CD4-positive, alpha-beta T cell (primary cell): ENCODE measurements at regions of chr19 and their contacts with region 1.

Region 1: GRCh38 chr19:34974646-34975045 is 10.6 kb upstream of the ZNF792 start:
- DNase-seq: peak in 1 of 14 experiments; percentile 37
- ATAC-seq: no peak
- H3K4me3 ChIP-seq: no peak overlapping the region
- H3K4me3 Mint-ChIP-seq: no peak overlapping the region
- H3K27ac ChIP-seq: no peak overlapping the region
- H3K27ac Mint-ChIP-seq: peak overlapping the region; percentile 18
- H3K4me1 ChIP-seq: peaks cover 21% of the 10 kb centered on the region
- H3K4me1 Mint-ChIP-seq: peaks cover 22% of the 10 kb centered on the region
- H3K27me3 ChIP-seq: no peaks in the 10 kb centered on the region
- H3K27me3 Mint-ChIP-seq: no peaks in the 10 kb centered on the region
- CTCF ChIP-seq: no peak

Region 2: DNA sequence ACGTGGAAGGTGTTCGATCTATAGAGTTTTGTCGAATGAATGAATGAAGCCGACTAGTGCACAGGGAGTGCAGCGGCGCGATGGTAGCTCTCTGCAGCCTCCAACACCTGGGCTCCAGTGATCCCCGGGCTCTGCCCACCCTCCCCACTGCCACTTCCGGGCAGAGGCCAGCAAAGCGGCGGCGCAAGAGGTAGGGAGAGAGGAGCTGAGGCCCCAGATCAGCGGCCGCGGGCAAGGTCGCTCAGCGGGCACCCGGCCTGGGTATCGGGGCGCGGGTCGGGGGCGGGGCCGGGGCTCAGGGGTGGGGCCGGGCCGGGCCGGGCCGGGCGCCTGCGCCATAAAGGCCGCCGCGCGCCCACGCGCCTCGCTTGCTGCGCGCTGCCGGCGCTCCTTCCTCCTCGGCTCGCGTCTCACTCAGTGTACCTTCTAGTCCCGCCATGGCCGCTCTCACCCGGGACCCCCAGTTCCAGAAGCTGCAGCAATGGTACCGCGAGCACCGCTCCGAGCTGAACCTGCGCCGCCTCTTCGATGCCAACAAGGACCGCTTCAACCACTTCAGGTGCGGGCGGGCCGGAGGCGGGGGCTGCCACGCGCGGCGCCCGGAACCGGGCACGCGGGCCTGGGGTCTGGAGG is 609.7 kb before region 1 on chr19 and contains the start of gene GPI:
- CTCF ChIA-PET with region 1: no interaction called
- POLR2A ChIA-PET with region 1: no interaction called
- intact Hi-C with region 1: no loop called
- DNase-seq: peak; percentile 32 to 85 (median 60)
- ATAC-seq: peak; percentile 94
- H3K4me3 ChIP-seq: peak within 1 kb of the TSS; percentile 95
- H3K4me3 Mint-ChIP-seq: peak within 1 kb of the TSS; percentile 99
- H3K27ac ChIP-seq: peak within 1 kb of the TSS in 1 of 2 donors; percentile 59
- H3K27ac Mint-ChIP-seq: peak within 1 kb of the TSS; percentile 87
- H3K4me1 ChIP-seq: peaks cover 37% of the 10 kb centered on the region
- H3K4me1 Mint-ChIP-seq: peaks cover 41% of the 10 kb centered on the region
- H3K27me3 ChIP-seq: no peaks in the 10 kb centered on the region
- H3K27me3 Mint-ChIP-seq: no peaks in the 10 kb centered on the region
- CTCF ChIP-seq: no peak
- total RNA-seq, gene GPI: 85.0 to 86.0 TPM

Region 3: DNA sequence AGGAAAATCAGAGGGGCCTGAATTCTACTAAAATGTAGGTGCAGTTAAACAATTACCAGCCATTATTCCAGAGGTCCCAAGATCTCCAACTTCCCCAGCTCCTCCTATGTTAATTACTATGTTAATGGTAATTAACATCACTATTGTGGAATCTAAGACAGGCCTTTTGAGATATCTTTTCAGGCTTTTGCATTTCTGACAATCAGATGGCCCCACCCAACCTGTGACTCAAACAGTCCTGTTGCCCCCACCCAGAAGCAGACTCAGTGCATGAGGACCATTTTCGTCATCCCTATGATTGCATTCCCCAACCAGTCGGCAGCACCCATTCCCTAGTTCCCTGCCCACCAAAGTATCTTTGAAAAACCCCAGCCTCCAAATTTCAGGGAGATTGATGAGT is 56.5 kb before region 1 on chr19:
- CTCF ChIA-PET with region 1: no interaction called
- POLR2A ChIA-PET with region 1: no interaction called
- intact Hi-C with region 1: no loop called
- DNase-seq: no peak
- ATAC-seq: no peak
- H3K4me3 ChIP-seq: no peak overlapping the region
- H3K4me3 Mint-ChIP-seq: no peak overlapping the region
- H3K27ac ChIP-seq: no peak overlapping the region
- H3K27ac Mint-ChIP-seq: no peak overlapping the region
- H3K4me1 ChIP-seq: no peaks in the 10 kb centered on the region
- H3K4me1 Mint-ChIP-seq: no peaks in the 10 kb centered on the region
- H3K27me3 ChIP-seq: no peaks in the 10 kb centered on the region
- H3K27me3 Mint-ChIP-seq: peaks cover 4% of the 10 kb centered on the region
- CTCF ChIP-seq: no peak

Region 4: GRCh38 chr19:34963573-34964409 is 10.9 kb before region 1 on chr19 and contains the start of gene ZNF792:
- CTCF ChIA-PET with region 1: interaction called, 3 read pairs
- POLR2A ChIA-PET with region 1: interaction called, 11 read pairs
- intact Hi-C with region 1: no loop called
- DNase-seq: peak in 13 of 14 experiments; percentile 9 to 65 (median 46)
- ATAC-seq: peak; percentile 63
- H3K4me3 ChIP-seq: peak within 1 kb of the TSS; percentile 93
- H3K4me3 Mint-ChIP-seq: peak within 1 kb of the TSS; percentile 96
- H3K27ac ChIP-seq: peak within 1 kb of the TSS; percentile 46 to 57
- H3K27ac Mint-ChIP-seq: peak within 1 kb of the TSS; percentile 89
- H3K4me1 ChIP-seq: peaks cover 36% of the 10 kb centered on the region
- H3K4me1 Mint-ChIP-seq: peaks cover 29% of the 10 kb centered on the region
- H3K27me3 ChIP-seq: no peaks in the 10 kb centered on the region
- H3K27me3 Mint-ChIP-seq: no peaks in the 10 kb centered on the region
- CTCF ChIP-seq: no peak
- total RNA-seq, gene ZNF792: 6.8 to 8.9 TPM

Region 5: DNA sequence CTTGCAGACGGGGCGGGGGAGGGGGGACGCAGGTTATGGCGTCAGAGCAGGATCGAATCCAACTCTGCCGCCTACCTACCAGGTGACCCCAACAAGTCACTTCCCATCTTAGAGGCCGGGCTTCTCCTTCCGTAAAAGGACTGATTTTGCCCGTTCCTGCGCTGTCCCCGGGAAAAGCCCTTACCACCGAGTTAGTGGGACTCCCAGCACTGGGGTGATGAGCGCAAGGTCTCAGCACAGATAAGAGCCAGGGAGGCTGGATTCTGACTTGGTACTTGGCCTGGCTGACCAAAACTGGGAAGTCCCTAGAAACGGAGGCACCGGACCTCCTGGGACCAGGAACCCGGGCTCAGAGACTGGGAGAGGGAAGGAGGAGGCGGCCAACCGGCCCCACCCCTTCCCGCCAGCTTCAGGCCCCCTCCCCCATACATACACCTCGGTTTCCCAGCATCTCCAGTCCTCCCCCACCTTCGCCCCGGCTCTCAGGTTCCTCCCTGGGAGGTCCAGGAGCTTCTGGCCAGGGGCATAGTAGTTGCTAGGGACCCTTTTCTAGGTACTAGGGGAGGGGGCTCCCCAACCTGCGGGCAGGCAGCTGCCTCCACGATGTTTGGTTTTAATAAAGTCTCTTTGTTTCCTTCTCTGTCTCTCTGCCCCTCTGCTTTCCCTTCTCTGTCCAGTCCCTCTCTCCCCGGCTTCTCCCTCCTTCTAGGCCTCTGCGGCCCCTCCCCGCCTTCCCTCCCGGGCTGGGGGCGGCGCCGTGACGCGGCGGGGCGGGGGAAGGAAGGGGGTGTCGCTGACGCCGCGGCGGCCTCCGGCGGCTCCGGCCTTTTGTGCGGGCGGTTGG is 25.1 kb after region 1 on chr19 and contains the start of gene GRAMD1A:
- CTCF ChIA-PET with region 1: interaction called, 10 read pairs
- POLR2A ChIA-PET with region 1: interaction called, 12 read pairs
- intact Hi-C with region 1: loop called (anchors 1 to 2 kb)
- DNase-seq: peak; percentile 50 to 85 (median 74)
- ATAC-seq: peak; percentile 28
- H3K4me3 ChIP-seq: peak within 1 kb of the TSS; percentile 59
- H3K4me3 Mint-ChIP-seq: peak within 1 kb of the TSS; percentile 99
- H3K27ac ChIP-seq: peak within 1 kb of the TSS; percentile 79 to 92
- H3K27ac Mint-ChIP-seq: peak within 1 kb of the TSS; percentile 98
- H3K4me1 ChIP-seq: peaks cover 89% of the 10 kb centered on the region
- H3K4me1 Mint-ChIP-seq: peaks cover 72% of the 10 kb centered on the region
- H3K27me3 ChIP-seq: no peaks in the 10 kb centered on the region
- H3K27me3 Mint-ChIP-seq: no peaks in the 10 kb centered on the region
- CTCF ChIP-seq: no peak
- total RNA-seq, gene GRAMD1A: 221 to 229 TPM

Region 6: DNA sequence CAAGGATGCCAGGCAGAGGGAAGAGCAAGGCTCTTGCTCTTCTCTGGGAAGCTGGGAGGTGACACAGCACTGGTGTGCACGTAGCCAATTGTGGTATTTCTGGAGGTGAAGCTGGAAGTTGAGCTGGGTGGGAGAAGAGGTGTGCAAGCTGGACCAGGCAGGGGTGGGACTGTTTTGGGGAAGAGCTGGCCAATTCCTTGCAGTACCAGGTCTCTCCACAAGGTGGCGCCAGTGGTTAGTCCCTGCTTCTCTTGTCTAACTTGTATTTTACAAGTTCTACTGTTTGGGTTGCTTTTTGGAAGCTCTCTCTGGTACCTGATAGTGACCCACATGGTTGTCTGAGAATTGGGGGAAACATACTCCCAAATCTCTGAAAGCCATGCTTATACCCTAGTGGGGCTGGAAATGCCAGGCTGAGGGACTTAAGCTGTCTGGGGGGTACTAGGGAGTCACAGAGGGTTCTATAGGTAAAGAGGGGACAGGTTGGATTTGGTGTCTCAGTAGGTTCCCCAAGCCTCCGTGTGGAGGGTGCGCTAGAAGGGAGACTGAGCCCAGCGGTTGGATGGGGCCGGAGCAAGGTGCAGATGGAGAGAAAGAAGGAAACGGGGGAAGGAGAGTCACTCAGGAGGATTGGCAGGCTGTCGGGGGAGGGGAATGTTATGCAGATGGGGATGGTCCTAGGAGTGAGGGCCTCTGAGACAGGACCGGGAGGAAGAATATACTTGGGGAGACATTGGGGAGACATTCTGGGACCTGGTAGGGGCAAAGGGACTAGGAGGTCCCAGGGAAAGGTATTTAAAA is 69.9 kb after region 1 on chr19:
- CTCF ChIA-PET with region 1: no interaction called
- POLR2A ChIA-PET with region 1: no interaction called
- intact Hi-C with region 1: loop called in 1 of 2 experiments (anchors 1 kb)
- DNase-seq: peak in 13 of 14 experiments; percentile 44 to 76 (median 58)
- ATAC-seq: peak; percentile 12
- H3K4me3 ChIP-seq: no peak overlapping the region
- H3K4me3 Mint-ChIP-seq: peak overlapping the region; percentile 81
- H3K27ac ChIP-seq: no peak overlapping the region
- H3K27ac Mint-ChIP-seq: no peak overlapping the region
- H3K4me1 ChIP-seq: peaks cover 43% of the 10 kb centered on the region
- H3K4me1 Mint-ChIP-seq: peaks cover 44% of the 10 kb centered on the region
- H3K27me3 ChIP-seq: no peaks in the 10 kb centered on the region
- H3K27me3 Mint-ChIP-seq: peaks cover 20% of the 10 kb centered on the region
- CTCF ChIP-seq: peak; percentile 98

Region 7: DNA sequence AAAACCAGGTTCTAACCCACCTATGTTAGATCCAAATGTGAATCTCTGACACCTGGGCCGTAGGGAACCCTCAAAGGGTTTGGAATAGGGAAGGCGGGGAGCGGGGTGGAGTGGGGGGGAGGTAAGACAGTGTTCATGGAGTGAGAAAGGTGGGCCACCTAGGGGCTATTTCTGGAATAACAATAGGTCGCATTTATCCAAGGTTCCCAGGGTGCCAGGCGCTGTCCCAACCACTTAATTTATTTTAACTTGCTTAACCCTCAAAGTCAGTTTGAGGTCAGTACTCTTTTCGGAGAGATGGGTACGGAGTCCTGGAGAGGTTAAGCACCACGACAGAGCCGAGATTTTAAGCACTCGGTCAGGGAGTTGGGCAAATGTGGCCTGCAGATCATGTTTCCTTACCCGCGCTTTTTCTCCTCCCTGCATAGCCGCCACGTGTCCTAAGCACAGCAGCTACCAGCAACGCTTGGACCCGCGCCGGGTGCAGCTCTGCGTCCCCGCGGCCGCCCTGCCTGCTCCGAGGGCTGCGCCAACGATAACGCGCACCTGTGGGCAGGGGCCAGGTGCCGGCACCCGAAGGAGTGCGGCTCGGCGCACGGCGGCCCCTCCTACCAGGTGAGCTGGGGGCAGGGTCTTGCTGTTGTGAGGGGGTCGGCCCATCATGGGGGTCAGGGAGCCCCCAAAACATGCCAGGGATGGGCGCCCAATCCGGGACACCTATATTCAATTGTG is 116.0 kb after region 1 on chr19:
- CTCF ChIA-PET with region 1: no interaction called
- POLR2A ChIA-PET with region 1: no interaction called
- intact Hi-C with region 1: loop called (anchors 1 kb)
- DNase-seq: peak in 11 of 14 experiments; percentile 5 to 70 (median 23)
- ATAC-seq: peak; percentile 80
- H3K4me3 ChIP-seq: no peak overlapping the region
- H3K4me3 Mint-ChIP-seq: no peak overlapping the region
- H3K27ac ChIP-seq: no peak overlapping the region
- H3K27ac Mint-ChIP-seq: no peak overlapping the region
- H3K4me1 ChIP-seq: peaks cover 11% of the 10 kb centered on the region
- H3K4me1 Mint-ChIP-seq: peaks cover 5% of the 10 kb centered on the region
- H3K27me3 ChIP-seq: peaks cover 10 to 11% of the 10 kb centered on the region in 2 experiments
- H3K27me3 Mint-ChIP-seq: peaks cover 12% of the 10 kb centered on the region
- CTCF ChIP-seq: peak; percentile 78